ENCODE measurements at regions of chr18 and their contacts with region 1.

Region 1: DNA sequence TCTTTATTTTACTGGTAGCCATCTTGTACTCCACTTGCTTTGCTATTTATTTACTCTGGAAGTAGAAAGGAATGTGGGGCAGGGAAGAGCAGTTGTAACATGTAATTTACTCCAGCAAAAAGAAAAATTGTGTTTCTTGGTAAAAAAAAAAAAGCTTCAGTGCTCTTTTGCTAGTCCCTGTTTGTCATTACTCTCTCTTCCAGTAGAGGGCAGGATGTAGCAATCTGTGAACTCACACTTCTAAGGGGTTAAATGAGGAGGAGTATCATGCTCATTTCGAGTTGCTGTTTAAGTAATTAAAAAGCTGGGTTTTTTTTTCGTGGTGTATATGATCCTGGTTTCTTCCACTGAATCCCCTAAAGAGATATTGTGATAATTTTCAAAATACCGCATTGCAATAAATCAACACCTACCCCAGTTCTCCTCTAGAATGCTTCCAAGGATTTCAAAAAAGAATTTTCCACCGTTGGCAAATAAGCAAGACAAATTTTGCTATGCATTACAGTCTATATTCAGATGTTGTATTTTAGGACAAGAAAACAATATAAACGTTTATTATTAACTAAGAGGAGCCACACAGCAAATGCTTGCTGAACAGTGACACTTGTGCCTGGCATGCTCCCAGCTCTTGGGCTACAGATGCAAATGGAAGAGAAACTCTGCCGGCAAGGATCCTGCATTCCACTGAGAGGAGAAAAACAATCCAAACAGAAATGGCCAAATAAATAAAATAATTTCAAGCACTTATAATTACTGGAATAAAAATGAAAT is 261.6 kb downstream of the ASXL3 start:
- DNase-seq: no peak
- H3K4me3 Mint-ChIP-seq: no peak overlapping the region
- H3K27ac Mint-ChIP-seq: no peak overlapping the region
- H3K4me1 Mint-ChIP-seq: no peaks in the 10 kb centered on the region
- H3K27me3 Mint-ChIP-seq: no peaks in the 10 kb centered on the region

Region 2: GRCh38 chr18:33781429-33781828 is 58.2 kb before region 1 on chr18:
- CTCF ChIA-PET with region 1: no interaction called
- intact Hi-C with region 1: no loop called
- DNase-seq: no peak
- H3K4me3 Mint-ChIP-seq: no peak overlapping the region
- H3K27ac Mint-ChIP-seq: no peak overlapping the region
- H3K4me1 Mint-ChIP-seq: no peaks in the 10 kb centered on the region
- H3K27me3 Mint-ChIP-seq: peaks cover 3% of the 10 kb centered on the region

Region 3: DNA sequence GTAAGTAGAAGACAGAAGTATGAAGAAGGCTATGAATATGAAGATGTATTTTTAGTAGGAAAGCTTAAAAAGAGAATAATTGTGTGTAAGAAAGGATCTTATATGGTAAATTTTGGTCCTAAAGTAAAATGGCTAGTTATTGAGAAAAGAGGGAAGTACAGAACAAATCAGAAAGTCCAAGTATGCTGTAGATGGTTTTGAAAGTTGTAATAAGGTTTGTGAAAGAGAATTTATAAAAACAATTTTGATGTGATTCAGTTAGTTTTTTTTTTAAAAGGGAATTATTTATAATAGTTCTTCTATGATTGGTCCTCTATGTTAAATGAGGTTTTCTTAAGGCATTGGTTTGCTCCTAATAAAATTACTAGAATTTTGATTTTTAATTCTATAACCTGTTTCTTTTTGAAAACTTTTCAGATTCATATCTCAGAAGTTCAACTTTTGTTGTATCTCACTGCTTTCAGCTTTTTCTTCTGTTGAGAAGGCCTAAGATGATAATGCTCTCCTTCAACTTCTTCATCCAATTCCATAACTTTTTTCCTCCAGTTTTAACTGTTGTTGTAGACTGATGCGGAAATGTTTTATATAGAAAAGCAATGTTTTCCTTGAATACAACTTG is 62.4 kb after region 1 on chr18:
- CTCF ChIA-PET with region 1: no interaction called
- intact Hi-C with region 1: no loop called
- DNase-seq: no peak
- H3K4me3 Mint-ChIP-seq: no peak overlapping the region
- H3K27ac Mint-ChIP-seq: no peak overlapping the region
- H3K4me1 Mint-ChIP-seq: no peaks in the 10 kb centered on the region
- H3K27me3 Mint-ChIP-seq: no peaks in the 10 kb centered on the region

Region 4: GRCh38 chr18:34322365-34323289 is 483.0 kb after region 1 on chr18:
- CTCF ChIA-PET with region 1: no interaction called
- intact Hi-C with region 1: loop called (anchors 5 kb)
- DNase-seq: peak; percentile 29
- H3K4me3 Mint-ChIP-seq: no peak overlapping the region
- H3K27ac Mint-ChIP-seq: no peak overlapping the region
- H3K4me1 Mint-ChIP-seq: no peaks in the 10 kb centered on the region
- H3K27me3 Mint-ChIP-seq: no peaks in the 10 kb centered on the region